Dendritic cell treated with granulocyte-macrophage colony-stimulating factor and Interleukin-4, amounts not matched to agents 40 ng/mL and 50 ng/mL, for 4 days (primary cell): ENCODE measurements at regions of chr14 and their contacts with region 1.

Region 1: GRCh38 chr14:36373982-36374673 is 53.7 kb upstream of the MBIP start:
- H3K4me3 Mint-ChIP-seq: no peak overlapping the region
- H3K27ac Mint-ChIP-seq: no peak overlapping the region
- H3K4me1 Mint-ChIP-seq: no peaks in the 10 kb centered on the region
- H3K27me3 Mint-ChIP-seq: peaks cover 18% of the 10 kb centered on the region

Region 2: GRCh38 chr14:36194663-36195062 is 179.5 kb before region 1 on chr14:
- intact Hi-C with region 1: no loop called
- H3K4me3 Mint-ChIP-seq: no peak overlapping the region
- H3K27ac Mint-ChIP-seq: no peak overlapping the region
- H3K4me1 Mint-ChIP-seq: no peaks in the 10 kb centered on the region
- H3K27me3 Mint-ChIP-seq: peaks cover 1% of the 10 kb centered on the region

Region 3: DNA sequence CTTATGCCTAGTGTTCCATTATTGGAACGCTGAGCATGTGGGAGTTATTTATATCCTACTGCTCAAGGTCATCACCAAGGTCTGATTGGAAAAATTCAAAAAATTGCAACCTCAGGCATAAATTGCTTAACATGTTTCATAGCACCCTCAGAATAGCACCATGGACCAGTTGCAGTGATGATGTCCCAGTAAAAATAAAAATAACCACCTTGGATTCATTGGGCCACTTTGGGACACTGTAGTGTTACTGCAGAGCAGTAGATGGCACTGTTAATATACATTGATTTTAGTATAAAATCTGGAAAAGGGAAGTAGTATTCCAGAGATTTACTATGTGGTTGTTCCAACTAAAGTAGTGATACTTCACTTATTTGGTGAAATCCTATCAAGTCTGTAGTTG is 166.6 kb before region 1 on chr14:
- intact Hi-C with region 1: loop called (anchors 1 kb)
- H3K4me3 Mint-ChIP-seq: no peak overlapping the region
- H3K27ac Mint-ChIP-seq: no peak overlapping the region
- H3K4me1 Mint-ChIP-seq: no peaks in the 10 kb centered on the region
- H3K27me3 Mint-ChIP-seq: peaks cover 1% of the 10 kb centered on the region

Region 4: GRCh38 chr14:36320200-36320896 is 53.8 kb before region 1 on chr14 and contains the start of gene MBIP:
- intact Hi-C with region 1: loop called (anchors 1 kb)
- H3K4me3 Mint-ChIP-seq: peak within 1 kb of the TSS; percentile 91
- H3K27ac Mint-ChIP-seq: peak within 1 kb of the TSS; percentile 92
- H3K4me1 Mint-ChIP-seq: peaks cover 14% of the 10 kb centered on the region
- H3K27me3 Mint-ChIP-seq: peaks cover 17% of the 10 kb centered on the region

Region 5: DNA sequence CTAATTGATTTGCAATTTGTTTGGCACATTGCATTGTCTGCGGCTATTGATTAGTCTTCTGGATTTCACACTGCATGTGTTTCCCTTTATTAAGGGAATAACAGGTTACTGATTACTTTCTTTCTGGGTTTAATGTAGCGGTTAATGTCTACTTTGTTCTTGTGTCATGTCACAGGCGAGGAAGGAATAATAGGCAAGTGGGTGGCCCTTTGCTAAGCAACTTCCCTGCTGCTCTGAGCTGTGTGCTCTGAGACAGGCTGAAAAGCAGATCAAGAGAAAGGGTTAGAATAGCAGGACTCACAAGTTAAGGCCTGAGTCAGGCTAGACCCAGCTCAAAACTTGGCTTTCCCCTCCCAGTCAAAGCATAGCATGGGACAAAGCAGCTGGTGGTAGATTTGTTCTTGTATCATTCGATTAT is 68.7 kb after region 1 on chr14:
- intact Hi-C with region 1: no loop called
- H3K4me3 Mint-ChIP-seq: no peak overlapping the region
- H3K27ac Mint-ChIP-seq: no peak overlapping the region
- H3K4me1 Mint-ChIP-seq: no peaks in the 10 kb centered on the region
- H3K27me3 Mint-ChIP-seq: peaks cover 12% of the 10 kb centered on the region